PC-3 (cell line): ENCODE measurements at regions of chr1 and their contacts with region 1.

Region 1: DNA sequence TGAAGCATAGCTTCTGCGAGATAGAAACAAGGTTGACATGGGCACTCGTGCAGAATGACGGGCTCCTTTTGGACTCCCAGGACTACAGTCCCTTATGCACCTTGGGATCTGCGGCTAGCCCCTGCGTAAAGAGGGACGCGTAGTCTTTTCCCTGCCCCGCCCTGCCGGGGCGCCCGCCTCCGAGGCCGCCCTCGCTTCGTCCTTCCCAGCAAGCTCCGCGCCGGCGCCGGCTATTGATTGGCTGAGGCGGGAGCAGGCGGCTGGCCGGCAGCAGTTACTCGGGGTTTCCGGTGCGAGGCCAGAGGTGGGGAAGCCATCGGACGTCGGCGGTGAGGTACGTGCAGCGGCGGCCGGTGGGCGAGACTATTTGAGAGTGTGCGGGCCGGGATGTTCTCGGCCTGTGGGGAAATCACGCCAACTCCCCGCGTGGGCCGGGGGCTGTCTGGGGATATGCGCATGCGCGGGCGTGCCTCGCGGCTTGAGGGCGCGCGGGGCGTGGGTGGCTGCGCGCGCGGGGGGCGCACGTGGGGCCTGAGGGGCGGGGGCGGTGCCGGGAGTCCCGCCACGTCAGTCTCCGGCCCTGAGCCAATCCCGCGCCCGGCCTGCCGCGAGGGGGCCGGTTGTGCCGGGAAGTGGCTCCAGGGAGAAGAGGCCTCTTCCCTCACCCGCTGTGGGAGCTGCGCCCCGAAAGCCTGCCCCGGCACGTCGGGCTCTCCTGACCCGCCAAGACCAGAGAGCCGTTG is at the start of gene TXLNA:
- DNase-seq: peak; percentile 91
- ATAC-seq: peak; percentile 86
- H3K4me3 ChIP-seq: peak within 1 kb of the TSS; percentile 95
- H3K27ac ChIP-seq: peak within 1 kb of the TSS; percentile 83
- H3K4me1 ChIP-seq: peaks cover 18% of the 10 kb centered on the region
- H3K27me3 ChIP-seq: no peaks in the 10 kb centered on the region
- CTCF ChIP-seq: no peak
- total RNA-seq, gene TXLNA: 64.2 and 79.0 TPM in 2 replicates

Region 2: GRCh38 chr1:30732277-30732996 is 1447.2 kb before region 1 on chr1:
- CTCF ChIA-PET with region 1: no interaction called
- POLR2A ChIA-PET with region 1: no interaction called
- intact Hi-C with region 1: no loop called
- DNase-seq: no peak
- ATAC-seq: no peak
- H3K4me3 ChIP-seq: no peak overlapping the region
- H3K27ac ChIP-seq: no peak overlapping the region
- H3K4me1 ChIP-seq: no peaks in the 10 kb centered on the region
- H3K27me3 ChIP-seq: no peaks in the 10 kb centered on the region
- CTCF ChIP-seq: no peak

Region 3: GRCh38 chr1:32005522-32005921 is 174.1 kb before region 1 on chr1:
- CTCF ChIA-PET with region 1: no interaction called
- POLR2A ChIA-PET with region 1: no interaction called
- intact Hi-C with region 1: no loop called
- DNase-seq: no peak
- ATAC-seq: no peak
- H3K4me3 ChIP-seq: no peak overlapping the region
- H3K27ac ChIP-seq: no peak overlapping the region
- H3K4me1 ChIP-seq: no peaks in the 10 kb centered on the region
- H3K27me3 ChIP-seq: no peaks in the 10 kb centered on the region
- CTCF ChIP-seq: no peak

Region 4: DNA sequence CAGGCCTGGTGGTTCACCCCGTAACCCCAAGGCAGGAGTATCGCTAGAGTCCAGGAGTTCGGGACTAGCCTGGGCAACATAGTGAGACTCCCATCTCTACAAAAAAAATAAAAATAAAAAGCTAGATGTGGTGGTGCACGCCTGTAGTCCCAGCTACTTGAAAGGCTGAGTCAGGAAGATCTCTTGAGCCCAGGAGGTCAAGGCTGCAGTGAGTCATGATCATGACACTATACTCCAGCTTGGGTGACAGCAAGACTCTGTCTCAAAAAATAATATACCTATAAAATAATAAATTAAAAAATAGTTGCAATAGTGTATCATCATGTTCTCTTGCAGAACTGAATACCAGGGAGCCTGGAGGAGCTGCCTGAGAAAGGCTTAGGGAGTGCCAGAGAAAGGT is 126.7 kb before region 1 on chr1:
- CTCF ChIA-PET with region 1: no interaction called
- POLR2A ChIA-PET with region 1: no interaction called
- intact Hi-C with region 1: no loop called
- DNase-seq: no peak
- ATAC-seq: peak; percentile 55
- H3K4me3 ChIP-seq: no peak overlapping the region
- H3K27ac ChIP-seq: no peak overlapping the region
- H3K4me1 ChIP-seq: no peaks in the 10 kb centered on the region
- H3K27me3 ChIP-seq: no peaks in the 10 kb centered on the region
- CTCF ChIP-seq: no peak

Region 5: GRCh38 chr1:32200226-32201010 is 20.8 kb after region 1 on chr1 and contains the start of gene CCDC28B:
- CTCF ChIA-PET with region 1: no interaction called
- POLR2A ChIA-PET with region 1: no interaction called
- intact Hi-C with region 1: loop called (anchors 2 kb)
- DNase-seq: no peak
- ATAC-seq: peak; percentile 42
- H3K4me3 ChIP-seq: peak within 1 kb of the TSS; percentile 67
- H3K27ac ChIP-seq: no peak within 1 kb of the TSS
- H3K4me1 ChIP-seq: peaks cover 25% of the 10 kb centered on the region
- H3K27me3 ChIP-seq: no peaks in the 10 kb centered on the region
- CTCF ChIP-seq: no peak
- total RNA-seq, gene CCDC28B: 4.7 and 5.5 TPM in 2 replicates

Region 6: DNA sequence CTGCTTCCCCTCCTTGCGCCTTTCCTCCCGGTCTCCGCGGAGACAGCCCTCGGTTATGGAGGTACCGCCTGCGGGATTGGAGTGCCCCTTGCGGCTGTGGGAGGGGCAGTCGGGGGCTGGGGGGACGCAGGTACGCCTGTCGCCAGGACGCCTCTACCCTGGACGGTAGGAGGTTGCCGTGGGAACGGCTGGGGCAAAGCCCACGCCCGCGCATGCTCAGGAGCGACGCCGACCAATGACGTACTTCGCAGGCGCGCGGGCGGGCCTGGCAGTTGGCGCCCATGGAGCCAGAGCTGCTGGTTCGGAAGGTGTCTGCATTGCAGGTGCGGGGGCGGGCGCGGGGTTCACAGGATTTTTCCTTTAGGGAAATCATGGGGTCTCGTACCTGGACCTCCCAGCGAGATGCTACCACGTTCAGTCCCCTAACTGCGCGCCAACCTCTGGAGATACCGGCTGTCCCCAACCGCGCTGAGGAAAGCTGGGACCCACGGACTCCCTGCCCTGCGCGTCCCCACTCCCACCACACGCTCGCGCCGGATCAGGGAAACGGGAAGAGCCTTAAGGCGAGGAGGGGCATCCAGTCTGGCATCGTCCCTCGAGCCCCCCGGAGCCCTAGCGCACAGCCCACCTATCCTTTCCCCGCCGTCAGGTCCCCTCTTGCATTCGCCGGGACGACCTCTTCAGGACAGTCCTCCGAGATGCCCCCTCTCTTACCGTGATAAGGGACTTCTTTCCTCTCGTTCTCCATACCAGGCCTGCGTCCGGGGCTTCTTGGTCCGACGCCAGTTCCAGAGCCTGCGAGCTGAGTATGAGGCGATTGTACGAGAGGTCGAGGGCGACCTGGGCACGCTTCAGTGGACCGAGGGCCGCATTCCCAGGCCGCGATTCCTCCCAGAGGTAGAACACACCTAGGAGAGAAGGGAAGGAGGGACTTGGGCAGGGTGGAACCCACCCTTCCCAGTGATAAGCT is 26.1 kb after region 1 on chr1 and contains the start of gene IQCC:
- CTCF ChIA-PET with region 1: no interaction called
- POLR2A ChIA-PET with region 1: interaction called, 11 read pairs
- intact Hi-C with region 1: loop called (anchors 2 kb)
- DNase-seq: peak; percentile 91
- ATAC-seq: peak; percentile 79
- H3K4me3 ChIP-seq: peak within 1 kb of the TSS; percentile 83
- H3K27ac ChIP-seq: peak within 1 kb of the TSS; percentile 27; the same call in 1 of the 2 replicates
- H3K4me1 ChIP-seq: peaks cover 27% of the 10 kb centered on the region
- H3K27me3 ChIP-seq: no peaks in the 10 kb centered on the region
- CTCF ChIP-seq: no peak
- total RNA-seq, gene IQCC: 8.5 and 11.8 TPM in 2 replicates

Region 7: GRCh38 chr1:32386676-32387392 is 207.2 kb after region 1 on chr1:
- CTCF ChIA-PET with region 1: no interaction called
- POLR2A ChIA-PET with region 1: no interaction called
- intact Hi-C with region 1: no loop called
- DNase-seq: no peak
- ATAC-seq: no peak
- H3K4me3 ChIP-seq: no peak overlapping the region
- H3K27ac ChIP-seq: no peak overlapping the region
- H3K4me1 ChIP-seq: no peaks in the 10 kb centered on the region
- H3K27me3 ChIP-seq: no peaks in the 10 kb centered on the region
- CTCF ChIP-seq: no peak